ENCODE measurements at regions of chr6 and their contacts with region 1.

Region 1: DNA sequence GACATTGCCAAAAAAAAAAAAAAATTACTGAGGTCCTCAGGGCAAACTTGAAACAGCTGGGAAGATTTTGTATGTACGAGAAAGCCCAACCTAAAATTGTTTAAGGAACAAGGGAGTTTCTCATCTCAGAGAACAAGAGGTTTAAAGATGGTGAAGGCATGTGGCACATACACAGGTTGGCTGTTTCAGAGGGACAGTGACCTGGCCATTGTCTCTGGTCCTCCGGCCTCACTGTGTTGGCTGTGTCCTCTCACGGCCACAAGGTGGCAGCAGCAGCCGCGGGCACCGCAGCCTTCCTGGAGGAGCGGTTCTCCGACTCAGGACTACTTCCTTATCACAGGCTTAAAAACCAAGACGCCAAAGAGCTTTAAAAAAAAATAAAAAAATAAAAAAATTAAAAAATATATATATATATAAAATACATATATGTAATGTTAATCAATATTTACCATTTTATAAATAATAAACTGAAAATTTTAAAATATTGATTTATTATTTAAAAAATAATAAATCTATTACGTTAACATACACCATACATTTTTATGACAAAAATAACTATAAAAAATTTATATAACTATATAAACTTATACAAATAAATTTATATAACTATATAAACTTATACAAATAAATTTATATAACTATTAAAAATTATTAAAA is 52.8 kb downstream of the GTF2H5 start:
- DNase-seq: peak; percentile 83
- H3K4me3 Mint-ChIP-seq: no peak overlapping the region
- H3K27ac Mint-ChIP-seq: no peak overlapping the region
- H3K4me1 Mint-ChIP-seq: no peaks in the 10 kb centered on the region
- H3K27me3 Mint-ChIP-seq: no peaks in the 10 kb centered on the region

Region 2: DNA sequence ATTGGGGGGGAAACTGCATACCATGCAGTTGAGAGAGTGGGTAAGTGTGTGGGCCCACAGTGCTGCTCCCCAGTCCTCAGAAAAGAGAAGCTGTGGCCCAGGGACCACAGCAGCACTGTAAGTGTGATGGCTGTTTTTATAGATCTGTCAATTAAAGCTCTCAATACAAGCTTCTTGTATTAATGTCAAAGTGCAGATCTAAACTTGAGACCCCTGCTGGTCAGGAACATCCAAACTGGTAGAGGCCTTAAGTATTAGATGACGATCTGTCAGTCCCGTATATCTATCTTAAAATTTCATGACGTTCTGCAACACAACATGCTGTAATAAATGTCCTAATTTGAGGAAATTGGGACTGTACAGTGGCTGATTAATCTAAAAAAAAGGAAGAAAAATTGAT is 166.1 kb after region 1 on chr6:
- CTCF ChIA-PET with region 1: interaction called, 15 read pairs
- intact Hi-C with region 1: loop called (anchors 1 kb)
- DNase-seq: no peak
- H3K4me3 Mint-ChIP-seq: no peak overlapping the region
- H3K27ac Mint-ChIP-seq: no peak overlapping the region
- H3K4me1 Mint-ChIP-seq: peaks cover 3% of the 10 kb centered on the region
- H3K27me3 Mint-ChIP-seq: no peaks in the 10 kb centered on the region

Region 3: GRCh38 chr6:158518191-158519127 is 297.5 kb after region 1 on chr6:
- CTCF ChIA-PET with region 1: interaction called, 9 read pairs
- intact Hi-C with region 1: loop called (anchors 1 kb)
- DNase-seq: peak; percentile 76
- H3K4me3 Mint-ChIP-seq: peak overlapping the region; percentile 79
- H3K27ac Mint-ChIP-seq: peak overlapping the region; percentile 79
- H3K4me1 Mint-ChIP-seq: peaks cover 38% of the 10 kb centered on the region
- H3K27me3 Mint-ChIP-seq: peaks cover 16% of the 10 kb centered on the region

Region 4: DNA sequence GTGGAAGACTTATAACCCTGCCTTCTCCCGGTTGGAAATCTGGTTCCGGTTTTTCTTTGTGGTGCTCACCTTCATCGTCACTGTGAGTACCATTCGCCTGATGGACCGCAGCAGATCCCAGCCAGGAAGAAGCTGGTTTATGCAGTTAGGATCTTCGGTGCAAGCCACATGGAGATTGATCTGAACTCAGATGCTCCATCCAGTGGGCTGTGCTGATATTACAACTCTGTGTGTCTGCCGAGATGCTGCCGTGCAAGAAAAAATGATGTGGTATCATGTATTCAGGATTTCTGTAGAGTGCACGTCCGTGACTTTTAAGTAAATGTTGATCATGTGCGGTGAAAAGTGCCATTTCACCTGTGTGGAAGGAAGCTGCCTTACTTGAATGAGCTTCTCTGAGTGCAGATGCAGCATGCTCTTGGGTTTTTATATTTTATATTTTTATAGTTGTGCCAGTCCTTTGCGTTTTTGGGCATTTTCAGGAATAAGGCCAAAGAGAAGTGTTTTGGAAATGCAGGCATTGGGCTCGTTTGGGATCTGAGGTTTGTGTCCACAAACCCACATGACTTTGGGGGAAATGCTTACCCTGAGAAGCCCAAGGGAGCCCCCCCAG is 384.5 kb after region 1 on chr6:
- CTCF ChIA-PET with region 1: interaction called, 9 read pairs
- intact Hi-C with region 1: loop called (anchors 1 kb)
- DNase-seq: peak; percentile 81
- H3K4me3 Mint-ChIP-seq: no peak overlapping the region
- H3K27ac Mint-ChIP-seq: no peak overlapping the region
- H3K4me1 Mint-ChIP-seq: no peaks in the 10 kb centered on the region
- H3K27me3 Mint-ChIP-seq: no peaks in the 10 kb centered on the region